Caco-2 (cell line): ENCODE measurements at regions of chr14 and their contacts with region 1.

Region 1: DNA sequence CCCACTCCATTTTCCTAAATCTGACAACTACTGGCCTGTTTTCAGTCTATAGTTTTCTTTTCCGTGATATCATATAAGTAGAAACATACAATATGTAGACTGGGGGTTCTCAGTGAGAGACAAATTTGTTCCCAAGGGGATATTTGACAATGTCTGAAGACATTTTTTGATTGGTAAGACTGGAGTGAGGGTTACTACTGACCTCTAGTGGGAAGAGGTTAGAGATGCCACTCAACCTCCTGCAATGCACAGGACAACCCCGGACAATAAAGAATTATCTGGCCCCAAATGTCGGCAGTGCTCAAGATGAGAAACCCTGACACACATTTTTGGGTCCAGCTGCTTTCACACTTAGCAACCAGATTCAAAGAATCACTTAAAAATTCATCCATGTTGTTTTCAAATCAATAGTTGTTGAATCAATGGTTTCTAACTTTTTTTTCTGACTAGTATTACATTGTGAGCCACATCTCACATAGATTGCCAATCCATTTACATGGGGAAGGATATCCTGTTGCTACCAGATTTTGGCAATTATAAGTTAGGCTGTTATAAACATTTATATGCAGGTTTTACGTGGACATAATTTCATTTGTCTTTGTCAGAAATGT is 307.1 kb downstream of the RPL10L start:
- DNase-seq: peak in 1 of 2 experiments; percentile 39
- H3K4me3 ChIP-seq: no peak overlapping the region
- H3K4me3 Mint-ChIP-seq: no peak overlapping the region
- H3K27ac Mint-ChIP-seq: no peak overlapping the region
- H3K4me1 ChIP-seq: no peaks in the 10 kb centered on the region
- H3K4me1 Mint-ChIP-seq: no peaks in the 10 kb centered on the region
- H3K27me3 ChIP-seq: no peaks in the 10 kb centered on the region
- H3K27me3 Mint-ChIP-seq: no peaks in the 10 kb centered on the region
- CTCF ChIP-seq: peak; percentile 48 to 80

Region 2: DNA sequence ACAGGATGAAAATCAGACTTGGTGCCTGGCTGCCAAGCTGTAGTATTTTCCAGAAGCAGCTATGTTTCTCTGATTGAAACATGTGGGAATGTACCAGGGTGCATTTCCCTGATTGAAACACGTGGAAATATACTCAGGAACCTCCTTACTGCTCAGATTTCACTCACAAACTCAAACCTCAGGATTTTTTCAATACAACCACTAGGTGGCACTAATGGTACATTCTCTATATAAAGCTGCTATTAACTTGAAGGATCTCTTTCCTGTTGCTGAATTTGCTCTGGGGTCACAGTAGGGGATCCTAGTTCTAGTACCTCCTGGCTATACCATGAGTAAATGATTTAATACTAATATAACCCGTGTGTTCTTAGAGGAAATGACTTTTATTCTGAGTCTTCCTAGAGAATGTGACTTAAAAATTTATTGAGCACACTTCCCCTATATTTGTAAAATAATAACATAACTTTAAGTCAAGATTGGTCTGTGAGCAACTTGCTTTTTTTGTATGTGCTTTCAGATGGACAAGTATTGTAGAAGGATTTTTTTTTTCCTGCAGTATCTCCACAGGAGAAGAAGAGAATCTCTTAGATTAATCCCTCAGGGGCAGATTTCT is 917.7 kb before region 1 on chr14:
- CTCF ChIA-PET with region 1: no interaction called
- POLR2A ChIA-PET with region 1: no interaction called
- intact Hi-C with region 1: loop called (anchors 1 kb)
- DNase-seq: peak in 1 of 2 experiments; percentile 39
- H3K4me3 ChIP-seq: no peak overlapping the region
- H3K4me3 Mint-ChIP-seq: no peak overlapping the region
- H3K27ac Mint-ChIP-seq: no peak overlapping the region
- H3K4me1 ChIP-seq: no peaks in the 10 kb centered on the region
- H3K4me1 Mint-ChIP-seq: no peaks in the 10 kb centered on the region
- H3K27me3 ChIP-seq: no peaks in the 10 kb centered on the region
- H3K27me3 Mint-ChIP-seq: no peaks in the 10 kb centered on the region
- CTCF ChIP-seq: peak; percentile 56 to 68

Region 3: DNA sequence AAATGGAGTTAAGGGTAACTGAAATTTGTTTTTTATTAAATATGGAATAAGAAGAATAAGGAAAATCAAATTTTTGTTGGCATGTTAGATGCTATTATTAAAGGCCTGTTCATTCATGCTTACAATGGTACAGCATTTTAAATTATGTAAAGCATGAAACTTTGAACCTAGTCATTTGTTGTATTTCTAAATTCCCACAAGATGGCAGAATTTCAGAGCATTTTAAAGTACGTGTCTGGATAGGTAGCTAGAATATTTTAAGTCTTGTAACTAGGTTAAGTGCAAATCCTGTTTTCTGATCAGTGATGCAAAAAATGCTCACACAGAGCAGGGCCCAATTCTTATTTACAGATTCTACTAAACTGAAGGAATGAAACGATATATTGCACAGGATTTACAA is 505.8 kb before region 1 on chr14:
- CTCF ChIA-PET with region 1: no interaction called
- POLR2A ChIA-PET with region 1: no interaction called
- intact Hi-C with region 1: loop called (anchors 2 kb)
- DNase-seq: no peak
- H3K4me3 ChIP-seq: no peak overlapping the region
- H3K4me3 Mint-ChIP-seq: no peak overlapping the region
- H3K27ac Mint-ChIP-seq: no peak overlapping the region
- H3K4me1 ChIP-seq: no peaks in the 10 kb centered on the region
- H3K4me1 Mint-ChIP-seq: no peaks in the 10 kb centered on the region
- H3K27me3 ChIP-seq: no peaks in the 10 kb centered on the region
- H3K27me3 Mint-ChIP-seq: no peaks in the 10 kb centered on the region
- CTCF ChIP-seq: peak in 1 of 2 experiments; percentile 6

Region 4: GRCh38 chr14:46048127-46048526 is 296.3 kb before region 1 on chr14:
- CTCF ChIA-PET with region 1: no interaction called
- POLR2A ChIA-PET with region 1: no interaction called
- intact Hi-C with region 1: loop called (anchors 1 kb)
- DNase-seq: peak; percentile 49 to 53
- H3K4me3 ChIP-seq: no peak overlapping the region
- H3K4me3 Mint-ChIP-seq: no peak overlapping the region
- H3K27ac Mint-ChIP-seq: no peak overlapping the region
- H3K4me1 ChIP-seq: no peaks in the 10 kb centered on the region
- H3K4me1 Mint-ChIP-seq: no peaks in the 10 kb centered on the region
- H3K27me3 ChIP-seq: no peaks in the 10 kb centered on the region
- H3K27me3 Mint-ChIP-seq: peaks cover 4% of the 10 kb centered on the region
- CTCF ChIP-seq: peak; percentile 52 to 61

Region 5: GRCh38 chr14:46250113-46250703 is 94.2 kb before region 1 on chr14:
- CTCF ChIA-PET with region 1: no interaction called
- POLR2A ChIA-PET with region 1: no interaction called
- intact Hi-C with region 1: loop called (anchors 1 kb)
- DNase-seq: peak in 1 of 2 experiments; percentile 17
- H3K4me3 ChIP-seq: no peak overlapping the region
- H3K4me3 Mint-ChIP-seq: no peak overlapping the region
- H3K27ac Mint-ChIP-seq: no peak overlapping the region
- H3K4me1 ChIP-seq: no peaks in the 10 kb centered on the region
- H3K4me1 Mint-ChIP-seq: no peaks in the 10 kb centered on the region
- H3K27me3 ChIP-seq: no peaks in the 10 kb centered on the region
- H3K27me3 Mint-ChIP-seq: peaks cover 2% of the 10 kb centered on the region
- CTCF ChIP-seq: peak; percentile 46 to 55